Activated CD4-positive, alpha-beta T cell treated with anti-CD3 and anti-CD28 coated beads, Interleukin-2, amount 10 ng/mL, durations not matched to agents 7 days and 5 days (primary cell): ENCODE measurements at regions of chr2 and their contacts with region 1.

Region 1: GRCh38 chr2:76251342-76251741 is 540.6 kb upstream of the GCFC2 start:
- DNase-seq: no peak
- H3K4me3 Mint-ChIP-seq: no peak overlapping the region
- H3K27ac Mint-ChIP-seq: no peak overlapping the region
- H3K4me1 Mint-ChIP-seq: no peaks in the 10 kb centered on the region
- H3K27me3 Mint-ChIP-seq: no peaks in the 10 kb centered on the region

Region 2: GRCh38 chr2:76268928-76269610 is 17.7 kb after region 1 on chr2:
- CTCF ChIA-PET with region 1: no interaction called
- POLR2A ChIA-PET with region 1: no interaction called
- DNase-seq: no peak
- H3K4me3 Mint-ChIP-seq: no peak overlapping the region
- H3K27ac Mint-ChIP-seq: no peak overlapping the region
- H3K4me1 Mint-ChIP-seq: no peaks in the 10 kb centered on the region
- H3K27me3 Mint-ChIP-seq: no peaks in the 10 kb centered on the region

Region 3: DNA sequence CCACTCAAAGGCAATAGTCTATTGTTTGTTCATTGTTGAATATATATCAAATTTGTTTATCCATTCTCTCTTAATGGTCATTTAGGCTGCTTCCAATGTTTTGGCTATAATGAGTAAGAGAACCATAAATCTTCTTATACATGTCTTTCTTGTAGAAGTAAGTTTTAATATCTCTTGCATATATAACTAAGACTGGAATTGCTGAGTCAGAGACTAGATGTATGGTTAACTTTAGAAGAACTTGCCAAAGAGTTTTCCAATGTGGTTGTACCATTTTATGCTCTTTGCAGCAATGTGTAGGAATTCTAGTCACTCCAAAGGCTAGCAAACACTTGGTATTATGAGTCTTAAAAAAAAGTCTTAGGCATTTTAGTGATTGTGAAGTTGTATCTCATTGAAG is 69.4 kb after region 1 on chr2:
- CTCF ChIA-PET with region 1: no interaction called
- POLR2A ChIA-PET with region 1: interaction called, 10 read pairs
- DNase-seq: no peak
- H3K4me3 Mint-ChIP-seq: no peak overlapping the region
- H3K27ac Mint-ChIP-seq: no peak overlapping the region
- H3K4me1 Mint-ChIP-seq: no peaks in the 10 kb centered on the region
- H3K27me3 Mint-ChIP-seq: no peaks in the 10 kb centered on the region